HepG2 (cell line): ENCODE measurements at regions of chr7 and their contacts with region 1.

Region 1: DNA sequence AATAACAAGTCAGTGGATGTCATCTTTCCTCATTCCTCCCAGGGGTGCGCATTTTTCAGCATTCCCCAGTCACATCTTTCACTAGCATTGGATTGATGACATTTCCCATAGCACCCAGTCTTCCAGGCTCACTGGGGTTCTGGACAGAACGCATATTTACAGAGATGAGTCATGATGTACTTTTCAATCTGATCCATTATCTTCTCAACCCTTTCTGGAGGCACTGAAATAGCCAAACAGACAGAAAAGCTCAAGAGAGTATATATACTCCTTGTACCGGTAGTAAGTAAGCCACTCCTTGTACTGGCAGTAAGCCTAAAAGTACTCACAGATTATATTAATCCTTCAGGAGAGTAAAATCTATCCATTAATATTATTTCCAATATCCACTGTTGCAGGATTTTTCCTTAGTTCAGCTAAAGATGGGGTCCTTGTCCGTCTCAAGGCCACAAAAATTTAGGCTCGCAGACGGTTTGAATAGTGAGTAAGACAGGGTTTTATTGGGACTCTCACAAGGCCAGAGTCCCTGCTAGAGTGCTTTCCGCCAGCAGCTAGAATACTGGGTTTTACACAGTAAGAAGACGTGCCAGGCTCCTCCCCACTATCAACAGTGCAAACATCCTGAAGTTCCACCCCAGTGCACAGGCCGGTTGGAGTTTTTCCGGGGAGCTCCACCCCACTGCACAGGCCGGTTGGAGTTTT is 60.8 kb downstream of the MDH2 start:
- DNase-seq: peak; percentile 80
- ATAC-seq: peak; percentile 93
- H3K4me3 ChIP-seq: peak overlapping the region; percentile 70 to 95 (median 75)
- H3K27ac ChIP-seq: peak overlapping the region; percentile 75
- H3K4me1 ChIP-seq: peaks cover 52% of the 10 kb centered on the region
- H3K27me3 ChIP-seq: no peaks in the 10 kb centered on the region; a peak in 1 of 5 replicates
- CTCF ChIP-seq: no peak
- EP300 ChIP-seq: peak in 1 of 2 experiments; percentile 52; a peak in 2 of 4 replicates
- POLR2A ChIP-seq: peak; percentile 79 to 80
- RAD21 ChIP-seq: no peak

Region 2: DNA sequence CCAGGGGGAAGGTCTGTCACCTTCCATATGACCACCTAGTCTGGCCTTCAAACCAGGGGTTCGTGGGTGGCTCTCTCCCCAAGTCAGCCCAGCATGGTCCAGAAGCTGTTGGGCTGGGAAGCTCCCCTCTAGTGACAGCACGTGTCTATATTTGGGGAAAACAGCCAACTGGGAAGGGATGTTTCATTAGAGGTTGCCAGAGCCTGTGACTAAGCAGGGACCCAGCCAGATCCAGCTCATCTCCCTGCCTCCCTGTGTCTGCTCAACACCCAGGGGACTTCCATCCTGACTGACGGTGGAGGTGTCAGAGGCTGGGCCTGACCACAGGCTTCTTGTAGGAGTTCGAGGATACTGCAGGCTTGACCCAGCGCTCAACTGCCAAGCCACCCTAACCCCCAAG is 71.4 kb before region 1 on chr7:
- CTCF ChIA-PET with region 1: no interaction called
- POLR2A ChIA-PET with region 1: no interaction called
- in situ Hi-C with region 1: no loop called
- intact Hi-C with region 1: no loop called
- DNase-seq: no peak
- ATAC-seq: no peak; the same call in 2 of the 3 replicates
- H3K4me3 ChIP-seq: no peak overlapping the region
- H3K27ac ChIP-seq: no peak overlapping the region
- H3K4me1 ChIP-seq: no peaks in the 10 kb centered on the region
- H3K27me3 ChIP-seq: no peaks in the 10 kb centered on the region
- CTCF ChIP-seq: no peak
- EP300 ChIP-seq: no peak
- POLR2A ChIP-seq: no peak
- RAD21 ChIP-seq: no peak

Region 3: DNA sequence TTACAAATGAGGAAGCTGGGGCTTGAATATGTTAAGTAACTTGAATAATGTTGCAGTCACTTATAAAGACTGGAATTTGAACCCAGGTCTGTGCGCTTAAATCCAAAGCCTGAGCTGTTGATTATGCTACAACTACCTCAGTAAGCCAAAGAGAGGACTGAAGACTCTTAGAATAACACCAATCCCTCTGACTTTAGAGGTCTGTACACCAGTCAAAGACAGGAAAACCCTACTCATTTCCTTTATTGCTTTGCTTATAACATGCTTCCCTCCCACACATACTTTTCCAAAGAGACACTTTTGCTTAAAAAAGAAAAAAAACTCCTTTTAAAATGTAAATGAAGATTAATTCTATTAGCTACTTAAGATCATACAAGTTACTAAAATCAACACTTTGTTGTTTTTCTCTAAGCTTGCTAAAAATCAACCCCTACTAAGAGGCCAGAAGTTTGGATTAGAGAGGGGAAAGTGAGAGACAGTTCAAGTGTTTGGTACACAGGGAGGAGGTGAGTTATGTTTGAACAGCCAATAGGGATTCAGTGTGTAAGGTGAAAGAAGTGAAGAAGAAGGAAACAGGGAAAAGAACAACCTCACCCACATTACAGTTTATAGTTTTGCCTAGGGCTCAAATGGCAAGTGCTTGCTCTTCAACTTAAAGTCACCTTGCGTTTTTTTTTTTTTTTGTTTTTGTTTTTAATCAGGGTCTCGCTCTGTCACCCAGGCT is 14.0 kb after region 1 on chr7:
- CTCF ChIA-PET with region 1: no interaction called
- POLR2A ChIA-PET with region 1: interaction called, 24 read pairs
- in situ Hi-C with region 1: no loop called
- intact Hi-C with region 1: no loop called
- DNase-seq: no peak
- ATAC-seq: no peak
- H3K4me3 ChIP-seq: no peak overlapping the region; a peak in 1 of 6 replicates
- H3K27ac ChIP-seq: peak overlapping the region; percentile 49
- H3K4me1 ChIP-seq: peaks cover 82% of the 10 kb centered on the region
- H3K27me3 ChIP-seq: no peaks in the 10 kb centered on the region
- CTCF ChIP-seq: no peak
- EP300 ChIP-seq: no peak
- POLR2A ChIP-seq: no peak
- RAD21 ChIP-seq: no peak

Region 4: DNA sequence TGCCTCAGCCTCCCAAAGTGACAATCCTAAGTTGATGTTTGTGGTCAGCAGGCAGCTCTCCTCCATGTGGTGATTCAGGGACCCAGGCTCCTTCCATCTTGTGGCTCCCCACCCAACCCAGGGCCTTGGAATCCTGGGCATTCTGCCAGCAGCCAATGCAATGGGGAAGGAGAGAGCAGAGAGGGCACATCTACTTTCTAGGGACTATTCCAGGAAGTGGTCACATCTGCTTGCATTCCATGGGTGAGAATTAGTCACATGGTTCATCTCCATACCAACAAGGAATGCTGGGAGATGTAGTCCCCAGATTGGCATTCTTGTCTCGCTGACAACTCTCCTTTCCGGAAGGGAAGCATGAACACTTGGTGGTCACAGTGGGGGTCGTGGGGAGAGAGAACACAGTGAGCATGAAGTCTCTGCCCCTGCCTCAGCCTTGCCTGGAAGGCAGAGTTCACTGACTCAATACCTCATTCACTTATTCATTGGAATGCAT is 83.1 kb after region 1 on chr7:
- CTCF ChIA-PET with region 1: no interaction called
- POLR2A ChIA-PET with region 1: no interaction called
- in situ Hi-C with region 1: no loop called
- intact Hi-C with region 1: no loop called
- DNase-seq: peak; percentile 46
- ATAC-seq: peak; percentile 77
- H3K4me3 ChIP-seq: no peak overlapping the region
- H3K27ac ChIP-seq: no peak overlapping the region
- H3K4me1 ChIP-seq: no peaks in the 10 kb centered on the region
- H3K27me3 ChIP-seq: peaks cover 0 to 4% of the 10 kb centered on the region in 2 experiments; a peak in 2 of 5 replicates
- CTCF ChIP-seq: no peak
- EP300 ChIP-seq: no peak
- POLR2A ChIP-seq: no peak
- RAD21 ChIP-seq: no peak